Right cardiac atrium (tissue), 5 donors: ENCODE measurements at regions of chr7 and their contacts with region 1.

Region 1: GRCh38 chr7:129367700-129368388 is 66.4 kb upstream of the STRIP2 start:
- DNase-seq: peak; percentile 71 to 89 (median 85)
- ATAC-seq: peak; percentile 86 to 92
- H3K4me3 ChIP-seq: no peak overlapping the region
- H3K27ac ChIP-seq: no peak overlapping the region
- H3K4me1 ChIP-seq: peaks cover 2% of the 10 kb centered on the region
- H3K27me3 ChIP-seq: no peaks in the 10 kb centered on the region

Region 2: GRCh38 chr7:129184981-129185670 is 182.7 kb before region 1 on chr7:
- intact Hi-C with region 1: no loop called
- DNase-seq: no peak
- ATAC-seq: no peak
- H3K4me3 ChIP-seq: no peak overlapping the region
- H3K27ac ChIP-seq: no peak overlapping the region
- H3K4me1 ChIP-seq: no peaks in the 10 kb centered on the region
- H3K27me3 ChIP-seq: no peaks in the 10 kb centered on the region

Region 3: DNA sequence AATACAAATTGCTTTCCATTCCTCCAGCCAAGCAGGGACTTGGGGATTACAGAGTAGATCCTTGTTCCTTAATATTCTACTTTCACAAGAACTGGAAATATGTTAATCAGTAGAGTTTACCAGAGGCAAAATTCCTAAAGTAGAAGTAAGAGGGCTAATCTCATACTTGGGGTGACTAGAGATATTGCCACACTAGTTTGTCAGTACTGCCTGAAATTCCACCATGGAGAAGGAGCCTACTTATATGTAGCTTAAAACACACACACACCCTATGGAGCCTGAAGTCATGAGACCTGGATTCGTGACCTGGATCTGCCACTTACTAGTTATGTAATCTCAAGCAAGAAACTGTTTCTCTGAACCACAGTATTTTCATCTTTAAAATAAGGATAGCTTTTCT is 100.2 kb after region 1 on chr7:
- intact Hi-C with region 1: loop called (anchors 2 to 5 kb)
- DNase-seq: no peak
- ATAC-seq: no peak
- H3K4me3 ChIP-seq: no peak overlapping the region
- H3K27ac ChIP-seq: no peak overlapping the region
- H3K4me1 ChIP-seq: no peaks in the 10 kb centered on the region
- H3K27me3 ChIP-seq: no peaks in the 10 kb centered on the region

Region 4: GRCh38 chr7:129626896-129627295 is 259.1 kb after region 1 on chr7:
- intact Hi-C with region 1: loop called in 1 of 4 experiments (anchors 10 kb)
- DNase-seq: no peak
- ATAC-seq: no peak
- H3K4me3 ChIP-seq: no peak overlapping the region
- H3K27ac ChIP-seq: no peak overlapping the region
- H3K4me1 ChIP-seq: no peaks in the 10 kb centered on the region
- H3K27me3 ChIP-seq: no peaks in the 10 kb centered on the region